Activated CD4-positive, alpha-beta T cell treated with anti-CD3 and anti-CD28 coated beads, Interleukin-2, amount 10 ng/mL, durations not matched to agents 24 days and 14 days (primary cell): ENCODE measurements at regions of chr22 and their contacts with region 1.

Region 1: DNA sequence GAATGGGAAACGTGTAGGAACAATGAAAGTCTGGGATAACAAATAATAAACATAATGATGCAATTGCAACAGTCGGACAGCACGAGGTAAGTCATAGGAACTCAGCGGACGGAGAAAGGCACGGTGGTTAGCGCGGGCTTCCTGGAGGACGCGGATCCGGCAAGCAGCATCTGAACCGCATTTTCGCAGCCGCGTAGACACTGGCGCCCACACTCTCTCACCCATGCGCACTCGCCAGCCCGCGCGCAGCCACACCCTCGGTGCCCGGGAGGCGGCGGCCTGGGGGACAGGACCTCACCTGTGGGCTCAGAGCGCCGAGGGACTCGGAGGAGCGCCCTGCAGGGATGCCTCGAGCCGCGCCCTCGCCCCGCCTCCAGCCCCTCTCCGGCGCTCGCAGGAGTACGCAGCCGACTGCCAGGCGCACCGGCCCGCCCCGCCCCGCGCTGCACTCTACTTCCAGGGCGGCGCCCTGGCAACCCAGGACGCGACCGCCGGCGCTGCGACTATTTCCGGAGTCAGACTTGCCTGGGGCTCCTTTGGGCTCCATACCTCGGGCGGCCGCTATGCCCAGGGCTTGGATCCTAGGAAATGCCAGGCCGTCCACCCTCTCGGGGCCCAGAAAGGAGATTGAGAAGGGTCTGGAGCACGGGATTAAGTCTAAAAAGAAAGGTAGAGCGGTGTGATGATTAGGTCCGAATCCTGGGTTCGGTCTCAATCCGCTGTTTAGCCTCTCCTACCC is at the start of gene TTLL1:
- DNase-seq: peak; percentile 97
- H3K4me3 Mint-ChIP-seq: peak within 1 kb of the TSS; percentile 91
- H3K27ac Mint-ChIP-seq: peak within 1 kb of the TSS; percentile 93
- H3K4me1 Mint-ChIP-seq: peaks cover 23% of the 10 kb centered on the region
- H3K27me3 Mint-ChIP-seq: no peaks in the 10 kb centered on the region
- total RNA-seq, gene TTLL1: 2.6 TPM in 2 replicates

Region 2: DNA sequence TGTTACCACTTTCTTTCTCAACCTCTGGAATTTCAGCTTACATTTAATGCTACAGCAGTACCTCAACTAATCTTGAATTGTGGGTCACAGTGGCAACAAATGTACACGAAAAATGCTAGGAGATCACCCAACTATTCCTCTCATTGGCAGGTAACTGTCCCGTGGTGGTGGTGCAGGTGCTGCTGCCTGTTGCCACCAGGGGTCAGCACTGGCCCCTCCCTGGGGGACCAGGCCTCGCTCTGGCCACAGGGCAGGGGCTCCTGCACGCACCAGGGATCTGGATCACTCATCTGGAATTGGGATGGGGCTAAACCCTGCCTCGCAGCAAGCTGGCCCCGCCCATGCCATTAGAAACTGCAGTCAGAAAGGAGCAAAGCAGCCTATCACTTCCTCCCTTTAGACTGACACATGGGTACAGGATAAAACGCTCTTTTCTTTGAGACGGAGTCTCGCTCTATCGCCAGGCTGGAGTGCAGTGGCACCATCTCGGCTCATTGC is 467.6 kb before region 1 on chr22:
- intact Hi-C with region 1: loop called (anchors 1 kb)
- DNase-seq: peak; percentile 88
- H3K4me3 Mint-ChIP-seq: no peak overlapping the region
- H3K27ac Mint-ChIP-seq: no peak overlapping the region
- H3K4me1 Mint-ChIP-seq: peaks cover 10% of the 10 kb centered on the region
- H3K27me3 Mint-ChIP-seq: no peaks in the 10 kb centered on the region

Region 3: DNA sequence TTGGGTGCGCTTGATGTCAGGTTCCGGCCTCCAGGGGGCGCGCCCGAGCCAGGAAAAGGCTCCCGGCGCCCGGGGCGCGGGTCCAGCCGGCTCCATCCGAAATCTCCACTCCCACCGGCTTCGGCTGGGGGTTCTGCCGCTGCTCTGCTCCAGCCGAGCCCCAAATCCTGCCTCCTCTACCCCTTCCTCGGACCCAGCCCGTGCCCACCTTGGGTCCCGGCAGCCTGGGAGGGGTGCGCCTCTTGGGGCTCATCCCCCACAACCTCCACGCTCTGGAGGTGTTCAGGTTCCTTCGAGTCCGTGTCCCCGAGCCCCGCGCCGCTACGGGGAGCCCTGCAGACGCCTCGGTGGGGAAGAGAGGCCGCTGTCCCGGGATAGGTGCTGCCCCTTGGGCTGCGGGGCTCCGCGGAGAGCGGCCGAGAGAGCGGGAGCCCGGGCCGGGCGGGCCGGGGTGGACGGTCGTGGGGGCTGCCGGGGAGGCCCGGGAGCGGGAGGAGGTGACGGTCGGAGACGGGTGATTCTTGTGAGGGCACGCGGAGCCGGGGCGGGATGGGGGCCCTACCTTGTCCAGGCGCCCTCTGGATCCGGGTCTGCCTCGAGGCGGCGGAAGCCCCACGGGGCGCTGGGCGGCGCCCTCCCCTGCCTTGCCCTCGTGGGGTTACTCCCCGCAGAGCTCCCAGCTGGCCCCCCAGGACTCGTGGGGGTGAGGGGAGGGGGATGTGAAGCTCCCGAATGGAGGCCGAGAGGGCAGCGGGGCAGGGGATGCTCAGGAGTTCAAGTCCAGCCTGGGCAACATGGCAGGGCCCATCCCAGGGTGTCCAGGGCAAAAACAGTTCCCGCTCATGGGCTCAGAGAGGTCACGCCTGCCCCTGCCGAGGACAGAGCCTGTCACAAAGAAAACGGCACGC is 426.8 kb before region 1 on chr22:
- intact Hi-C with region 1: loop called (anchors 1 kb)
- DNase-seq: peak; percentile 95
- H3K4me3 Mint-ChIP-seq: peak overlapping the region; percentile 79
- H3K27ac Mint-ChIP-seq: no peak overlapping the region
- H3K4me1 Mint-ChIP-seq: no peaks in the 10 kb centered on the region
- H3K27me3 Mint-ChIP-seq: peaks cover 14% of the 10 kb centered on the region

Region 4: GRCh38 chr22:42863349-42863961 is 225.7 kb before region 1 on chr22:
- intact Hi-C with region 1: loop called (anchors 10 kb)
- DNase-seq: peak; percentile 62
- H3K4me3 Mint-ChIP-seq: peak overlapping the region; percentile 13
- H3K27ac Mint-ChIP-seq: peak overlapping the region; percentile 91
- H3K4me1 Mint-ChIP-seq: peaks cover 12% of the 10 kb centered on the region
- H3K27me3 Mint-ChIP-seq: peaks cover 5% of the 10 kb centered on the region

Region 5: GRCh38 chr22:43014869-43015676 is 74.1 kb before region 1 on chr22 and contains the start of gene PACSIN2:
- intact Hi-C with region 1: loop called (anchors 1 kb)
- DNase-seq: peak; percentile 100
- H3K4me3 Mint-ChIP-seq: peak within 1 kb of the TSS; percentile 95
- H3K27ac Mint-ChIP-seq: peak within 1 kb of the TSS; percentile 88
- H3K4me1 Mint-ChIP-seq: peaks cover 26% of the 10 kb centered on the region
- H3K27me3 Mint-ChIP-seq: peaks cover 8% of the 10 kb centered on the region
- total RNA-seq, gene PACSIN2: 32.5 and 33.0 TPM in 2 replicates

Region 6: GRCh38 chr22:43126480-43127165 is 37.5 kb after region 1 on chr22:
- intact Hi-C with region 1: no loop called
- DNase-seq: no peak
- H3K4me3 Mint-ChIP-seq: no peak overlapping the region
- H3K27ac Mint-ChIP-seq: no peak overlapping the region
- H3K4me1 Mint-ChIP-seq: peaks cover 3% of the 10 kb centered on the region
- H3K27me3 Mint-ChIP-seq: no peaks in the 10 kb centered on the region